ENCODE measurements at regions of chr17 and their contacts with region 1.

Region 1: GRCh38 chr17:47840740-47841603 is at the start of gene SCRN2:
- DNase-seq: peak; percentile 83
- H3K4me3 ChIP-seq: peak within 1 kb of the TSS; percentile 73 to 76
- H3K27ac ChIP-seq: peak within 1 kb of the TSS; percentile 70 to 80
- H3K4me1 ChIP-seq: peaks cover 7% of the 10 kb centered on the region
- H3K27me3 ChIP-seq: no peaks in the 10 kb centered on the region
- CTCF ChIP-seq: peak; percentile 85 to 99 (median 94)
- POLR2A ChIP-seq: no peak
- total RNA-seq, gene SCRN2: 32.6 to 44.4 TPM

Region 2: GRCh38 chr17:47725446-47726111 is 115.4 kb before region 1 on chr17:
- intact Hi-C with region 1: no loop called
- DNase-seq: no peak
- H3K4me3 ChIP-seq: no peak overlapping the region
- H3K27ac ChIP-seq: no peak overlapping the region
- H3K4me1 ChIP-seq: no peaks in the 10 kb centered on the region
- H3K27me3 ChIP-seq: peaks cover 7% of the 10 kb centered on the region
- CTCF ChIP-seq: no peak
- POLR2A ChIP-seq: no peak

Region 3: DNA sequence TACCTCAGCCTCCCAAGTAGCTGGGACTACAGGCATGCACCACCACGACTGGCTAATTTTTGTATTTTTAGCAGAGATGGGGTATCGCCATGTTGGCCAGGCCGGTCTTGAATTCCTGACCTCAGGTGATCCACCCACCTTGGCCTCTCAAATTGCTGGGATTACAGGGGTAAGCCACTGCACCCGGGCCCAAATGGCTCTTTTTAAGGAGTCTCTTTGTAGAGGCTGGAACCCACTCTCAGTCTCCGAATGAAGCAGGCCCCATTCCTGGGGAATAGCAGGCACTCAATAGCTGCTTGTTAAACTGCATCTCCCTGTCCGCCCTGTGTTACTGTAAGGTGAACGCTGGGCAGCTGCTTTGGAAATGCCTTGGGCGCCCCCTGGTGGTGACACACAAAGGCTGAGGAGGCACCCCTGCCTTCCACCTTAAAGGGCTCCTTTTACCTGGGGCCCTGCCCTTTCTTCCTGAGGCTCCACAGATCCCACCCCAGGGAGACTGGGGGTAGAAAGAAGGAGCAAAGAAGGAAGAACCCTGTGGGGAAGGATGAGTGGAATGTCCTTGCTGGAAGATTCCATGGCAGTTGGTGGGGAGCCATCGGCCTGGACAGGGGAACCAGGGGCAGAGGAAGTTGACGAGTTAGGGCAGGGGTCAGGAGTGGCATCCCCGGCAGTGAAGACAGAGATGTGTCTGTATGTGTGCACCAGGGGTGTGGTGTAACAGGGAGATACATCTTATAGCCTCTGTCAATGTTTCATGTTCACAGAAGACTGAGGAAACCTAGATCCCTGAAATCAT is 49.0 kb after region 1 on chr17:
- intact Hi-C with region 1: loop called (anchors 1 kb)
- DNase-seq: peak; percentile 90
- H3K4me3 ChIP-seq: no peak overlapping the region
- H3K27ac ChIP-seq: no peak overlapping the region
- H3K4me1 ChIP-seq: no peaks in the 10 kb centered on the region
- H3K27me3 ChIP-seq: no peaks in the 10 kb centered on the region
- CTCF ChIP-seq: peak; percentile 96 to 99 (median 96)
- POLR2A ChIP-seq: no peak

Region 4: GRCh38 chr17:47949136-47949759 is 108.3 kb after region 1 on chr17:
- intact Hi-C with region 1: loop called (anchors 5 kb)
- DNase-seq: peak; percentile 89
- H3K4me3 ChIP-seq: peak overlapping the region; percentile 13 to 29
- H3K27ac ChIP-seq: peak overlapping the region; percentile 89 to 93
- H3K4me1 ChIP-seq: peaks cover 16% of the 10 kb centered on the region
- H3K27me3 ChIP-seq: no peaks in the 10 kb centered on the region
- CTCF ChIP-seq: peak; percentile 80 to 97 (median 94)
- POLR2A ChIP-seq: no peak

Region 5: GRCh38 chr17:49191917-49192741 is 1351.2 kb after region 1 on chr17:
- intact Hi-C with region 1: loop called (anchors 10 kb)
- DNase-seq: peak; percentile 93
- H3K4me3 ChIP-seq: peak overlapping the region; percentile 68 to 79
- H3K27ac ChIP-seq: peak overlapping the region; percentile 95 to 97
- H3K4me1 ChIP-seq: no peaks in the 10 kb centered on the region
- H3K27me3 ChIP-seq: no peaks in the 10 kb centered on the region
- CTCF ChIP-seq: peak in 3 of 4 experiments; percentile 31 to 44 (median 33)
- POLR2A ChIP-seq: peak; percentile 35